HEK293T (cell line): ENCODE measurements at regions of chr9 and their contacts with region 1.

Region 1: GRCh38 chr9:34899535-34900158 is 58.4 kb upstream of the PHF24 start:
- DNase-seq: peak; percentile 81

Region 2: DNA sequence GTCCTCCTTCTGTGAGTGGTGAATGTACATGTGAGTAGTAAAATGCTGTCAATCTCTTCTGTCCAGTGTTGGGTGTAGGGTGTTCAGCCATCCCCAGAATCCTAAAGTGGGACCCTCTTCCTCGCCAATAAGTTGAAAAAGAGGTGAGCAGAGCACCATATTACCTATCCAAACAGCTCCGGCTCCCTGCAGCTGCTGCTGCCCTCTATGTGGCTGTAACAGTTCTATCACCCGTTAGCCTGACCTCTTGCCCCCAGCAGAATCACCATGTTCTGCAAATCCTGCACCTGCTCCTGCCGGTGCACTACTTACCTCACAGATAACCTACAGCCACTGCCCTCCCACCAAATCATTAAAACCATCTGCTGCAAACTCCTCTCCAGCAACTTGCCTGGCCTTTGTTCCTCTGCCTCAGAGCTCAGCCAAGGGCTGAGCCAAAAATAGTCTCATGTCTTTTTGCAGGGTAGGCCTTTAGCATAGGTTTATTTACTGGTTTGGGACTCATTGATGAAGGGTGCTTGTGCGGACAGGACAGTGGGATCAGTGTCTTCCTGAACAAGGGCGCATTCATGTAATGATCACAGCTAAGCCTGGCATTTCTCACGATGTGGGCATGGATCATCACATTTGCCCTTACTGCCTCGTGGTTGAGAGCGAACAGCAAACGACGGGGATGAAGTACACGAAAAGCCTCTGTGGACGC is 140.1 kb before region 1 on chr9:
- CTCF ChIA-PET with region 1: interaction called, 13 read pairs
- POLR2A ChIA-PET with region 1: no interaction called
- DNase-seq: no peak

Region 3: DNA sequence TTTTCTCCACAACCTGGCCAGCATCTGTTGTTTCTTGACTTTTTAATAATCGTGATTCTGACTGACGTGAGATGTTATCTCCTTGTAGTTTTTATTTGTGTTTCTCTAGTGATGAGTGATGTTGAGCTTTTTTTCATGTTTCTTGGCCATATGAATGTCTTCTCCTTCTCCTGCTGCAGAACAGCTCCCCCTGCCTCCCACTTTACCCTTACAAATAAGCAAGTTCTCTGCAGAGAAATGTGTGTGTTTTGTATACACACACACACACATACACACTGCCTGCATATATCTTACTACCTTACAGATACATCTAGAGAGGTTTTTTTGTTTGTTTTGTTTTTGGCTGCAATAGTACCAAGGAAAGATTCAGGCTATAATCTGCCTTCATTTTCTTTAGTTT is 30.3 kb before region 1 on chr9:
- CTCF ChIA-PET with region 1: no interaction called
- POLR2A ChIA-PET with region 1: no interaction called
- DNase-seq: no peak

Region 4: GRCh38 chr9:34985311-34985899 is 85.8 kb after region 1 on chr9:
- CTCF ChIA-PET with region 1: interaction called, 15 read pairs
- POLR2A ChIA-PET with region 1: interaction called, 3 read pairs
- DNase-seq: peak; percentile 56

Region 5: GRCh38 chr9:35060548-35061207 is 161.0 kb after region 1 on chr9:
- CTCF ChIA-PET with region 1: no interaction called
- POLR2A ChIA-PET with region 1: no interaction called
- DNase-seq: no peak

Region 6: DNA sequence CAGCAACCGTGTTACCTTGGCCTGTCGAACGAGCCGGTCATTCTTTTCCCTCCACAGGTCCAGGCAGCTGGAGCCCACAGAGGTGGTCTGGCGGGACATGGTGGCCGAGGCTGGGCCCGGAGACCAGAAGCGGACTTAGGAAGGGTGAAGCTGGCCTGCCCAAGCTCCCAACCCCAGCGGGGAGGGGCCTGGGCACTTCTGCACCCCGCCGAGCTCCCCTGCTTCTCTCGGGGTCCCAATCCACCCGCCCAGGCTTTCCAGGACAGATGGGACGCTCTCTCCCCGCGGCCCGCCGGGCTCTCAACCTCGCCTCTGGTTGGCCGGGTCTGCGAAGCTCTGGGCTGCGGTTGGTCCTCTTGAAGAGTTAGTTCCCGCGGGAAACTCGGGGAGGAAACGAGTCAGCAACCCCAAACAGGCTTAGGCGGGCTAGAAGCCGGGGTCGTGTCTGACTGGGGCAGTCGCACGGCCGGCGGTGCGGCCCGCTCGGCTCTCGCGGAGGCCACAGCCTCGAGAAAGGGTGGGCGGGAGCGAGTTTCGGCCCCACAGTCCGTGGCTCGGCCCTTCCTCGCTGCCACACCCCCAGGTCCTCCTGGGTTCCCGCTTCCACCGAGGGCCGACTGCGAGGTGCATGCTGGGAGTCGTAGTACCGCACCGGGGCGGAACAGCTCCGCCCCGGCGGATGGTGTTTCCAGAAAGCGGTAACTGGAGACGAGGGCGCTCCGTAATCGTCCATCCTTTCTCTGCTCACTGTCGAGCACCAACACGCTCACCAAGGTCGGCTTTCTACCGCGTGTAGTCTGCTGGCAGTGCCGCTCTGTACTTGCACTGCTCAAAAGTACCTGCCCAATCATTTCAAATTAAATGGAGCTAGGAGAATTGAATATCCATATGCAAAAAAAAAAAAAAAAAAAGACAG is 180.0 kb after region 1 on chr9 and contains the start of gene FANCG:
- CTCF ChIA-PET with region 1: no interaction called
- POLR2A ChIA-PET with region 1: no interaction called
- DNase-seq: peak; percentile 87